ENCODE measurements at regions of chr4 and their contacts with region 1.

Region 1: GRCh38 chr4:98185279-98185678 is 42.0 kb upstream of the STPG2 start:
- DNase-seq: no peak
- ATAC-seq: no peak
- H3K4me3 ChIP-seq: no peak overlapping the region
- H3K4me3 Mint-ChIP-seq: no peak overlapping the region
- H3K27ac ChIP-seq: no peak overlapping the region
- H3K27ac Mint-ChIP-seq: no peak overlapping the region
- H3K4me1 ChIP-seq: no peaks in the 10 kb centered on the region
- H3K4me1 Mint-ChIP-seq: no peaks in the 10 kb centered on the region
- H3K27me3 ChIP-seq: no peaks in the 10 kb centered on the region
- H3K27me3 Mint-ChIP-seq: peaks cover 4% of the 10 kb centered on the region
- CTCF ChIP-seq: no peak

Region 2: GRCh38 chr4:97762115-97762512 is 423.2 kb before region 1 on chr4:
- CTCF ChIA-PET with region 1: no interaction called
- POLR2A ChIA-PET with region 1: no interaction called
- intact Hi-C with region 1: loop called in 1 of 2 experiments (anchors 5 kb)
- DNase-seq: no peak
- ATAC-seq: no peak
- H3K4me3 ChIP-seq: no peak overlapping the region
- H3K4me3 Mint-ChIP-seq: no peak overlapping the region
- H3K27ac ChIP-seq: no peak overlapping the region
- H3K27ac Mint-ChIP-seq: no peak overlapping the region
- H3K4me1 ChIP-seq: no peaks in the 10 kb centered on the region
- H3K4me1 Mint-ChIP-seq: no peaks in the 10 kb centered on the region
- H3K27me3 ChIP-seq: no peaks in the 10 kb centered on the region
- H3K27me3 Mint-ChIP-seq: no peaks in the 10 kb centered on the region
- CTCF ChIP-seq: no peak

Measured in CD8-positive, alpha-beta T cell (primary cell).